Dorsolateral prefrontal cortex (tissue), 120 donors: ENCODE measurements at regions of chr1 and their contacts with region 1.

Region 1: GRCh38 chr1:2821966-2822620 is 20.6 kb upstream of the TTC34 start:
- DNase-seq: peak in 7 of 10 donors; percentile 10 to 73 (median 38)
- H3K4me3 ChIP-seq: no peak overlapping the region
- H3K27ac ChIP-seq: no peak overlapping the region
- H3K27me3 ChIP-seq: peaks cover 0 to 12% (median 0%) of the 10 kb centered on the region in 45 donors
- CTCF ChIP-seq: peak in 55 of 56 donors; percentile 29 to 82 (median 70)

Region 2: DNA sequence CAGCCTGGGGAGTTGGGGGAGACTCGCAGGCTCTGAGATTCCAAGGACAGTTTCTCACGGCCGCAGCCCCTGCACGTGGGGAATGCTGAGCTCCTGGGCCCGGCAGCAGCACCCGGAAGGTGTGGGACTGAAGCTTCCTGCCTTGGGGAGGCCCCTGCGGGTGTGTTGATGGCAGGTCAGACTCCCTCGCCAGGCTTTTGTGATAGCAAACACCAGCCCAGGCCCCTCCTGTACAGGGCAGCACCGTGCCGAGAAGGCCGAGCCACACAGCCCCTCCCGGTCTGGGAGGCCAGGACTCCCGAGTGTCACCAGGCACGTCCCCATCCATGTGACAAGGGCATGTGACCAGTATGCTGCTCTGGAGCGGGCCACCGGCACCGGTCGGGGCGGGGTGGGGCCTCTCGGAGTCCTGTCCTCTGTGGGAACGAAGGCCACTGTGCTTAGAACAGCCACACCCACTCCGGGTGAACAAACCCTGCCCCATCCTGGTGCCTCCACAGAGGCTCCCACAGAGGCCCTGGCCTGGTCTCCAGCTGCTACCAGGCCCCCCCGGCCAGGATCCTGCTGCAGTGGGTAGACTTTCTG is 601.2 kb after region 1 on chr1:
- intact Hi-C with region 1: loop called (anchors 5 kb)
- DNase-seq: peak in 9 of 10 donors; percentile 47 to 79 (median 69)
- H3K4me3 ChIP-seq: no peak overlapping the region
- H3K27ac ChIP-seq: peak overlapping the region in 52 of 59 donors; percentile 19 to 85 (median 68)
- H3K27me3 ChIP-seq: no peaks in the 10 kb centered on the region
- CTCF ChIP-seq: peak in 2 of 56 donors; percentile 12 to 16